ENCODE measurements at regions of chr6 and their contacts with region 1.

Region 1: GRCh38 chr6:25962149-25963127 is at the start of gene TRIM38:
- DNase-seq: peak in 4 of 5 donors; percentile 65 to 87 (median 78)
- ATAC-seq: peak; percentile 91 to 96 (median 93)
- H3K4me3 ChIP-seq: peak within 1 kb of the TSS; percentile 27 to 93 (median 62)
- H3K27ac ChIP-seq: peak within 1 kb of the TSS; percentile 74 to 99 (median 91)
- H3K4me1 ChIP-seq: peaks cover 0 to 60% (median 36%) of the 10 kb centered on the region in 12 donors
- H3K27me3 ChIP-seq: no peaks in the 10 kb centered on the region
- CTCF ChIP-seq: no peak
- POLR2A ChIP-seq: peak in 1 of 2 donors; percentile 89
- total RNA-seq, gene TRIM38: 1.9 to 8.4 (median 2.6) TPM

Region 2: GRCh38 chr6:25094726-25095125 is 867.7 kb before region 1 on chr6:
- intact Hi-C with region 1: loop called in 1 of 10 experiments (anchors 10 kb)
- DNase-seq: no peak
- ATAC-seq: no peak
- H3K4me3 ChIP-seq: no peak overlapping the region
- H3K27ac ChIP-seq: no peak overlapping the region
- H3K4me1 ChIP-seq: peaks cover 0 to 8% (median 0%) of the 10 kb centered on the region in 12 donors
- H3K27me3 ChIP-seq: no peaks in the 10 kb centered on the region
- CTCF ChIP-seq: no peak
- POLR2A ChIP-seq: no peak

Region 3: GRCh38 chr6:25992413-25993037 is 30.1 kb after region 1 on chr6:
- intact Hi-C with region 1: loop called in 1 of 10 experiments (anchors 1 kb)
- DNase-seq: peak; percentile 95 to 98 (median 96)
- ATAC-seq: peak; percentile 88 to 98 (median 98)
- H3K4me3 ChIP-seq: peak overlapping the region; percentile 38 to 83 (median 66)
- H3K27ac ChIP-seq: peak overlapping the region; percentile 80 to 95 (median 91)
- H3K4me1 ChIP-seq: peaks cover 0 to 23% (median 11%) of the 10 kb centered on the region in 12 donors
- H3K27me3 ChIP-seq: no peaks in the 10 kb centered on the region
- CTCF ChIP-seq: peak; percentile 97 to 100 (median 99)
- POLR2A ChIP-seq: peak in 1 of 2 donors; percentile 85

Region 4: DNA sequence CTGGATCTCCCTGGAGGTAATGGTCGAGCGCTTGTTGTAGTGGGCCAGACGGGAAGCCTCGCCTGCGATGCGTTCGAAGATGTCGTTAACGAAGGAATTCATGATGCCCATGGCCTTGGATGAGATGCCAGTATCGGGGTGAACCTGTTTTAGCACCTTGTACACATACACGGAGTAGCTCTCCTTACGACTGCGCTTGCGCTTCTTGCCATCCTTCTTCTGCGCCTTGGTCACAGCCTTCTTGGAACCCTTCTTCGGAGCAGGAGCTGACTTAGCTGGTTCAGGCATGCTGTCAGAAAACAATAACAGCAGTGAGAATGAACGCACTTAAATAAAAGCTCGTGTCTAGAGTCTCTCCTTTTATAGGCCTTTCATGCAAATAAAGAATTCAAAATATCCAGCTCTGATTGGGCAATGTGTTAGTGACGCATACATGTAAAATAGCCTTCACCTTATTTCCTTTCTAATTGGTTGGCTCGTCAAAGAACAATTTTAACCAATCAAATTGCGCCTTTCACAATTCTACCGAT is 254.0 kb after region 1 on chr6:
- intact Hi-C with region 1: no loop called
- DNase-seq: peak; percentile 56 to 70 (median 60)
- ATAC-seq: peak; percentile 86 to 89 (median 88)
- H3K4me3 ChIP-seq: peak overlapping the region; percentile 19 to 74 (median 62)
- H3K27ac ChIP-seq: peak overlapping the region; percentile 81 to 98 (median 94)
- H3K4me1 ChIP-seq: peaks cover 0 to 31% (median 9%) of the 10 kb centered on the region in 12 donors
- H3K27me3 ChIP-seq: peaks cover 0 to 20% (median 0%) of the 10 kb centered on the region in 9 donors
- CTCF ChIP-seq: no peak
- POLR2A ChIP-seq: peak; percentile 84 to 98